GM23248 (cell line): ENCODE measurements at regions of chr4 and their contacts with region 1.

Region 1: GRCh38 chr4:145216535-145216934 is 36.1 kb upstream of the OTUD4 start:
- DNase-seq: peak; percentile 62
- H3K4me3 ChIP-seq: no peak overlapping the region
- H3K27ac ChIP-seq: no peak overlapping the region
- H3K4me1 ChIP-seq: no peaks in the 10 kb centered on the region
- H3K27me3 ChIP-seq: no peaks in the 10 kb centered on the region

Region 2: GRCh38 chr4:144750348-144750747 is 466.2 kb before region 1 on chr4:
- in situ Hi-C with region 1: no loop called
- DNase-seq: no peak
- H3K4me3 ChIP-seq: no peak overlapping the region
- H3K27ac ChIP-seq: no peak overlapping the region
- H3K4me1 ChIP-seq: no peaks in the 10 kb centered on the region
- H3K27me3 ChIP-seq: no peaks in the 10 kb centered on the region

Region 3: DNA sequence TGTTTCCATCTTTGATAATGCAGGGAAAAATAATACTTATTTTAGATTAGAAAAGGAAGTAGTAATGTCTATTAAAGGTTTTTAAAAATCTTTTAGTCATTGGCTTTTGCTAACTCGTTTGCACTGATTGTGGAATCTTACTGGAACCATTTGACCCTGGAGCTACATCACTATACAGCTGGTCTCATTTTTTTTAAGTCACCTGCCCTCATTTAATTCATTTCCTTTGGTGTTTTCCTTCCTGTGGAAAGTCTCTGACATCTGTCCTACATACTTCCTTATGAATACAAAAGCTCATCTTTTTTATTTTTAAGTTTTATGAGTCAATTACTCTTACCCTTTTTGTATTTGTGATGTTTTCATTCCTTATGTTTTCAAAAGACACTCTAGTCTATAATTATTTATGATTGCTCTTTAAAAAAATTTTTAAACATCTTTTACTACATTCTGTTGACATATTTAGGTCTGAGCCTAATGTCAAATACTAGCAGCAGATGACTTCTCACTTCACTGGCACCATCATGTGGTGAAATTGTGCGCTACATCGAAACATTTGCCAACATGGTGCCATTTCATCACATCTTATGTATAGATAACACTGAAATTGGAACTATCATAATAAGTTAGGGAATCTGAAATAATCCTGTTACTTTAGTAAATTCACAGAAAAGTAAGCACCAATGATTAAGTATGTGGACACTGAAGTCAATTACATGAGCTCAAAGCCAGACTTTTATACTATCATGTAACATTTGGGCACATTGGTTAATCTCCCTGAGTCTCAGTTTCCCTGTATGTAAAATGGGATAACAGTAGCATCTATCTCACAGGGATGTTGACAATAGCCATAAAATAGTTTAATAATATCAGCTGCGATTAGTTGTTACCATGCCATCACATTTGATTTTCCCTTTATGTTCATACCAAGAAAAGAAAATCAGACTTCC is 393.2 kb after region 1 on chr4:
- in situ Hi-C with region 1: loop called (anchors 10 kb)
- DNase-seq: peak; percentile 78
- H3K4me3 ChIP-seq: no peak overlapping the region
- H3K27ac ChIP-seq: no peak overlapping the region
- H3K4me1 ChIP-seq: no peaks in the 10 kb centered on the region
- H3K27me3 ChIP-seq: no peaks in the 10 kb centered on the region

Region 4: GRCh38 chr4:146368209-146368608 is 1151.7 kb after region 1 on chr4:
- in situ Hi-C with region 1: no loop called
- DNase-seq: no peak
- H3K4me3 ChIP-seq: no peak overlapping the region
- H3K27ac ChIP-seq: no peak overlapping the region
- H3K4me1 ChIP-seq: no peaks in the 10 kb centered on the region
- H3K27me3 ChIP-seq: no peaks in the 10 kb centered on the region